Head of caudate nucleus (tissue), 42 donors: ENCODE measurements at regions of chr11 and their contacts with region 1.

Region 1: GRCh38 chr11:112121981-112122615 is 35.4 kb downstream of the SDHD start:
- DNase-seq: no peak

Region 2: DNA sequence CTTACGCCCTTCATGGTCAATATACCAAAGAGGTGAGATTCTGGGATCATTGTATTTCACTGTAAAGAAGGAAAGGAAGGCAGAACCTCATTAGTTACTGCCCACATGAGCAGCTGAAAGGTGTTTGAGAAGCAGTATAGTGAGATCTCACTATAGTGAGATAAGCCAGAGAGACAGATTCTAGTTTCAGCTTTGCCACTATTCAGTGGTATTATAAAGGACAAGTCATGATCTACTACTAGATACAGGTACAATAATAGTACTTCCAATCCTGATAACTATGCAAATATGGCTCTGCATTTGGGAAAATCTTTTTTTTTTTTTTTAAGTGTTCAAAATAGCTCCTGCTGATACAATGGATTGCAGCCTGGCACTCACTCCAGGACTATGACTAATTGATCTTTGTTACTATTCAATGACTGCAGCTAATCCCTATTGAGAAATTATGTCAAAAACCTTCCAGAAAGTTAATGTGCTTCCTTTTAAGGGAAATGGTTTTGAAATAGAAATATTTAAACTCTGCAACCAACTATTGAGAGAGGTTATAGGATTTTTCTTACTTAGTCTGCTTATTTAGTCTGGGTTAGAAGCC is 105.2 kb before region 1 on chr11:
- intact Hi-C with region 1: no loop called
- DNase-seq: no peak

Region 3: GRCh38 chr11:112166546-112166945 is 44.4 kb after region 1 on chr11:
- intact Hi-C with region 1: loop called (anchors 5 kb)
- DNase-seq: peak in 9 of 42 donors; percentile 9 to 62 (median 36)